ENCODE measurements at regions of chr6 and their contacts with region 1.

Region 1: GRCh38 chr6:28569748-28570147 is 44.1 kb downstream of the GPX5 start:
- DNase-seq: no peak
- ATAC-seq: no peak
- H3K4me3 ChIP-seq: no peak overlapping the region
- H3K27ac ChIP-seq: no peak overlapping the region
- H3K4me1 ChIP-seq: no peaks in the 10 kb centered on the region
- H3K27me3 ChIP-seq: no peaks in the 10 kb centered on the region
- CTCF ChIP-seq: no peak
- POLR2A ChIP-seq: no peak

Region 2: GRCh38 chr6:28274888-28275287 is 294.9 kb before region 1 on chr6:
- intact Hi-C with region 1: no loop called
- DNase-seq: no peak
- ATAC-seq: no peak
- H3K4me3 ChIP-seq: no peak overlapping the region
- H3K27ac ChIP-seq: no peak overlapping the region
- H3K4me1 ChIP-seq: peaks cover 0 to 11% (median 0%) of the 10 kb centered on the region in 4 donors
- H3K27me3 ChIP-seq: no peaks in the 10 kb centered on the region
- CTCF ChIP-seq: no peak
- POLR2A ChIP-seq: no peak

Region 3: DNA sequence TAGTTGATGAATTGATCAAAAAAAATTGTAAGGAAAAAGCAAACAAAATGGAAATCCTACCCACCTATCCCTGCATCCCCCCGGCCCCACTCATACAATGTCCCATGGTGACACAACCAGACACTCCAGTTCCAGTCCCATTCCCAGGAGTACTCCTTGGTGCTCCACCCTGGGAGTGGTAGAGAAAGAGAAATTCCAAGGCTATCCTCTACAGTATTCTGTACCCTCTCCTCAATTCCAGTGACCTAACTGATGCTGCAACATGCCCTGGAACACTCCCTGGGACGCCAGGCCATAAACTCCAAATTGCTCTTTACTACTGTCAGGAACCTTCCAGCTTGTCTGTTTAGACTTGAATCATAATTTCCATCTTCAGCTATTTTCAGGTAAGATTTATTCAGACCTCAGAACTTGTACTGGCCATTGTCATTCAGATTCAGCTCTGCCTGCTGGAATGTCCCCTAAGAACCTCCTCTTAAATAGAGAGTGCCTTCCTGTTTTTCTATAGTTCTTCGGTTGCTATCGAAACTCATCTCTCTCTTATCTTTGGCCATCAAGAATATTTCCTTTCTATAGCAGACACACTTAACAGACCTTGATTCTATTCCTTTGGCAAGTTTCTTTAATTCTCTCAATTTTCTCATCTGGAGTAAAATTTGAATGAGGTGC is 62.8 kb before region 1 on chr6:
- intact Hi-C with region 1: loop called in 1 of 2 experiments (anchors 10 kb)
- DNase-seq: no peak
- ATAC-seq: no peak
- H3K4me3 ChIP-seq: no peak overlapping the region
- H3K27ac ChIP-seq: no peak overlapping the region
- H3K4me1 ChIP-seq: no peaks in the 10 kb centered on the region
- H3K27me3 ChIP-seq: no peaks in the 10 kb centered on the region
- CTCF ChIP-seq: no peak
- POLR2A ChIP-seq: no peak

Measured in right lobe of liver (tissue), 6 donors.